ENCODE measurements at regions of chr9 and their contacts with region 1.

Region 1: GRCh38 chr9:6673326-6674025 is 27.9 kb upstream of the GLDC start:
- DNase-seq: no peak
- H3K4me3 ChIP-seq: no peak overlapping the region
- H3K27ac ChIP-seq: no peak overlapping the region
- H3K4me1 ChIP-seq: no peaks in the 10 kb centered on the region
- H3K27me3 ChIP-seq: no peaks in the 10 kb centered on the region
- CTCF ChIP-seq: no peak
- POLR2A ChIP-seq: no peak

Region 2: GRCh38 chr9:6353851-6354686 is 319.4 kb before region 1 on chr9:
- intact Hi-C with region 1: loop called in 1 of 2 experiments (anchors 10 kb)
- DNase-seq: peak in 5 of 7 donors; percentile 19 to 29 (median 27)
- H3K4me3 ChIP-seq: no peak overlapping the region
- H3K27ac ChIP-seq: no peak overlapping the region
- H3K4me1 ChIP-seq: peaks cover 0 to 7% of the 10 kb centered on the region in 2 donors
- H3K27me3 ChIP-seq: no peaks in the 10 kb centered on the region
- CTCF ChIP-seq: peak; percentile 68 to 90 (median 84)
- POLR2A ChIP-seq: no peak

Region 3: GRCh38 chr9:6584881-6585597 is 88.4 kb before region 1 on chr9:
- intact Hi-C with region 1: loop called (anchors 5 to 10 kb)
- DNase-seq: no peak
- H3K4me3 ChIP-seq: no peak overlapping the region
- H3K27ac ChIP-seq: no peak overlapping the region
- H3K4me1 ChIP-seq: no peaks in the 10 kb centered on the region
- H3K27me3 ChIP-seq: no peaks in the 10 kb centered on the region
- CTCF ChIP-seq: peak; percentile 19 to 61 (median 48)
- POLR2A ChIP-seq: no peak